B cell (primary cell): ENCODE measurements at regions of chr22 and their contacts with region 1.

Region 1: GRCh38 chr22:42437488-42438292 is 5.5 kb upstream of the NFAM1 start:
- DNase-seq: peak; percentile 90
- ATAC-seq: peak; percentile 88
- H3K4me3 ChIP-seq: peak overlapping the region; percentile 9 to 73 (median 49)
- H3K4me3 Mint-ChIP-seq: peak overlapping the region; percentile 86
- H3K27ac ChIP-seq: peak overlapping the region in 1 of 2 donors; percentile 69
- H3K27ac Mint-ChIP-seq: peak overlapping the region; percentile 79
- H3K4me1 ChIP-seq: peaks cover 36 to 46% of the 10 kb centered on the region in 2 donors
- H3K4me1 Mint-ChIP-seq: peaks cover 40% of the 10 kb centered on the region
- H3K27me3 ChIP-seq: peaks cover 0 to 58% (median 18%) of the 10 kb centered on the region in 4 experiments
- H3K27me3 Mint-ChIP-seq: peaks cover 41% of the 10 kb centered on the region
- CTCF ChIP-seq: peak; percentile 98

Region 2: DNA sequence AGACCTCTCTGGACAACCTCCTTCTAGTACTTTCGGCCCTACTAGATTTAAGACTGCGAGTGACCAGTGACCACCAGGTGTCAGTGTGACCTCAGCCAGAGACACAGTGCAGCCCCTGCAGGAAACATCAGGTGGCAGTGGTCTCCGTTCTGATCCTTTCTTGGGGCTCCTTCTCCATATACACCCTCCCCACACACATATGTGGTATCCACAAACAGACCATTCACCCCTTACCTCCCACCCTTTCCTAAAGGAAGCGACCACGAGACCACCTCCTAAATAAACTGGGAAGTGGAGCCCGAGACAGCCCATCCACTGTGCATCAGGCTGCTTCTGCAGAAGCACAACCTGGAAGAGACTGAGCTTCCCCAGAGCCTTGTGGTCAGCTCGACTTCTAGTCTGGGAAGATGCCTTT is 268.6 kb before region 1 on chr22:
- CTCF ChIA-PET with region 1: interaction called, 131 read pairs
- POLR2A ChIA-PET with region 1: no interaction called
- intact Hi-C with region 1: loop called (anchors 1 kb)
- DNase-seq: peak; percentile 79
- ATAC-seq: peak; percentile 67
- H3K4me3 ChIP-seq: no peak overlapping the region
- H3K4me3 Mint-ChIP-seq: no peak overlapping the region
- H3K27ac ChIP-seq: no peak overlapping the region
- H3K27ac Mint-ChIP-seq: peak overlapping the region; percentile 61
- H3K4me1 ChIP-seq: peaks cover 12 to 31% of the 10 kb centered on the region in 2 donors
- H3K4me1 Mint-ChIP-seq: peaks cover 29% of the 10 kb centered on the region
- H3K27me3 ChIP-seq: no peaks in the 10 kb centered on the region
- H3K27me3 Mint-ChIP-seq: no peaks in the 10 kb centered on the region
- CTCF ChIP-seq: peak; percentile 83

Region 3: GRCh38 chr22:42277988-42278776 is 159.5 kb before region 1 on chr22:
- CTCF ChIA-PET with region 1: interaction called, 14 read pairs
- POLR2A ChIA-PET with region 1: no interaction called
- intact Hi-C with region 1: no loop called
- DNase-seq: no peak
- ATAC-seq: no peak
- H3K4me3 ChIP-seq: no peak overlapping the region
- H3K4me3 Mint-ChIP-seq: no peak overlapping the region
- H3K27ac ChIP-seq: no peak overlapping the region
- H3K27ac Mint-ChIP-seq: no peak overlapping the region
- H3K4me1 ChIP-seq: peaks cover 4 to 8% of the 10 kb centered on the region in 2 donors
- H3K4me1 Mint-ChIP-seq: peaks cover 6% of the 10 kb centered on the region
- H3K27me3 ChIP-seq: peaks cover 0 to 19% (median 6%) of the 10 kb centered on the region in 4 experiments
- H3K27me3 Mint-ChIP-seq: peaks cover 14% of the 10 kb centered on the region
- CTCF ChIP-seq: no peak

Region 4: GRCh38 chr22:42313804-42314581 is 123.7 kb before region 1 on chr22:
- CTCF ChIA-PET with region 1: interaction called, 5 read pairs
- POLR2A ChIA-PET with region 1: no interaction called
- intact Hi-C with region 1: loop called (anchors 5 kb)
- DNase-seq: peak; percentile 69
- ATAC-seq: peak; percentile 70
- H3K4me3 ChIP-seq: no peak overlapping the region
- H3K4me3 Mint-ChIP-seq: no peak overlapping the region
- H3K27ac ChIP-seq: no peak overlapping the region
- H3K27ac Mint-ChIP-seq: no peak overlapping the region
- H3K4me1 ChIP-seq: peaks cover 0 to 12% of the 10 kb centered on the region in 2 donors
- H3K4me1 Mint-ChIP-seq: peaks cover 12% of the 10 kb centered on the region
- H3K27me3 ChIP-seq: peaks cover 0 to 16% (median 2%) of the 10 kb centered on the region in 4 experiments
- H3K27me3 Mint-ChIP-seq: peaks cover 32% of the 10 kb centered on the region
- CTCF ChIP-seq: peak; percentile 33

Region 5: DNA sequence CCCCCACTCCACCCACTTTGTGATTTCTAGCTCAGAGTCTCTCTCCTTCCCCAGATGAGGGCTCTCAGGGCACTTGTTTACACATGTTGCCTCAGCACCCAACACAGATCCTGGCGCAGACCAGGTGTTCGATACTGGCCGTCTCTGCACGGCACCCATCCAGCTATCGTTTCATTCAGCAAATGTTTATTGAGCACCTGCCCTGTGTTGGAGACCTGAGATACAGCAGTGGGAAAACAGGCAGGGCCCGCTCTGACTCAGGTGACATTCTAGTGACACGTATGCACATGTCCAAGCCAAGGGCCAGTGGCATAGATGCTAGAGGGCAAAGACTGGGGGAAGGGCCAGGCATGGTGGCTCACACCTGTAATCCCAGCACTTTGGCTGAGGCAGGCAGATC is 77.3 kb before region 1 on chr22:
- CTCF ChIA-PET with region 1: no interaction called
- POLR2A ChIA-PET with region 1: no interaction called
- intact Hi-C with region 1: no loop called
- DNase-seq: no peak
- ATAC-seq: no peak
- H3K4me3 ChIP-seq: no peak overlapping the region
- H3K4me3 Mint-ChIP-seq: no peak overlapping the region
- H3K27ac ChIP-seq: no peak overlapping the region
- H3K27ac Mint-ChIP-seq: no peak overlapping the region
- H3K4me1 ChIP-seq: peaks cover 11 to 12% of the 10 kb centered on the region in 2 donors
- H3K4me1 Mint-ChIP-seq: peaks cover 10% of the 10 kb centered on the region
- H3K27me3 ChIP-seq: peaks cover 0 to 71% (median 14%) of the 10 kb centered on the region in 4 experiments
- H3K27me3 Mint-ChIP-seq: peaks cover 49% of the 10 kb centered on the region
- CTCF ChIP-seq: no peak

Region 6: GRCh38 chr22:42396621-42397331 is 40.9 kb before region 1 on chr22:
- CTCF ChIA-PET with region 1: interaction called, 11 read pairs
- POLR2A ChIA-PET with region 1: interaction called, 5 read pairs
- intact Hi-C with region 1: loop called (anchors 1 kb)
- DNase-seq: peak; percentile 84
- ATAC-seq: peak; percentile 67
- H3K4me3 ChIP-seq: peak overlapping the region; percentile 38 to 78 (median 53)
- H3K4me3 Mint-ChIP-seq: peak overlapping the region; percentile 92
- H3K27ac ChIP-seq: peak overlapping the region; percentile 80 to 99
- H3K27ac Mint-ChIP-seq: peak overlapping the region; percentile 99
- H3K4me1 ChIP-seq: peaks cover 40 to 46% of the 10 kb centered on the region in 2 donors
- H3K4me1 Mint-ChIP-seq: peaks cover 51% of the 10 kb centered on the region
- H3K27me3 ChIP-seq: no peaks in the 10 kb centered on the region
- H3K27me3 Mint-ChIP-seq: no peaks in the 10 kb centered on the region
- CTCF ChIP-seq: peak; percentile 49

Region 7: DNA sequence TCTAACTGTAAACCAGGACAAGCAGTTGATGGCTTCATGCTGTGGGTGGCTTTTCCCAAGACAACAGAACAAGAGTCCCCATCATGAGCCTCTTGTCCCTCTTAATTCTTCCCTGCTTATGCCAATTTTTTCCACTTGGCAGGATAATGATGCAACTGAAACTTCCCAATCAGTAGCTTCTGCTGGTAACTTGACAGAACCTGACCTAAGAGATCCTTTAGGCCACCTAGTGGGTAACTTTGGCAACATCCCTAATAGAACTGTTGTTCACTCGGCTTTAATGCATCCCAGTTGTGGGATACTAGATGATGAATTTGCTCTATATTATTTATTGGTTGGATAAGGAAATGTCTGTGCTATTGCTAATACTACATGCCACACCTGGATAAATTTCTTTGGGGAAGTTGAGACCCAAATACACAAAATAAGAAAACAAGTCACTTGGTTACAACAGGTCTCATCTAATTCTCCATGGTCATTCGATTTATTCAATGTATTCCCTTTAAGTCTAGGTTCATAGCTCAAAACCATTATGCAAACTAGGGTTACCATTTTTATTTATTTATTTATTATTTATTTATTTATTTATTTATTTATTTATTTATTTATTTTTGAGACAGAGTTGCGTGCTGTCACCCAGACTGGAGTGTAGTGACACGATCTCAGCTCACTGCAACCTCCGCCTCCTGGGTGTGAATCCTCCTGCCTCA is 35.9 kb after region 1 on chr22:
- CTCF ChIA-PET with region 1: interaction called, 19 read pairs
- POLR2A ChIA-PET with region 1: no interaction called
- intact Hi-C with region 1: no loop called
- DNase-seq: peak; percentile 68
- ATAC-seq: peak; percentile 41
- H3K4me3 ChIP-seq: no peak overlapping the region
- H3K4me3 Mint-ChIP-seq: no peak overlapping the region
- H3K27ac ChIP-seq: no peak overlapping the region
- H3K27ac Mint-ChIP-seq: no peak overlapping the region
- H3K4me1 ChIP-seq: peaks cover 0 to 3% of the 10 kb centered on the region in 2 donors
- H3K4me1 Mint-ChIP-seq: peaks cover 4% of the 10 kb centered on the region
- H3K27me3 ChIP-seq: peaks cover 0 to 1% (median 0%) of the 10 kb centered on the region in 4 experiments
- H3K27me3 Mint-ChIP-seq: peaks cover 11% of the 10 kb centered on the region
- CTCF ChIP-seq: peak; percentile 78